HEK293 (cell line): ENCODE measurements at regions of chr7 and their contacts with region 1.

Region 1: DNA sequence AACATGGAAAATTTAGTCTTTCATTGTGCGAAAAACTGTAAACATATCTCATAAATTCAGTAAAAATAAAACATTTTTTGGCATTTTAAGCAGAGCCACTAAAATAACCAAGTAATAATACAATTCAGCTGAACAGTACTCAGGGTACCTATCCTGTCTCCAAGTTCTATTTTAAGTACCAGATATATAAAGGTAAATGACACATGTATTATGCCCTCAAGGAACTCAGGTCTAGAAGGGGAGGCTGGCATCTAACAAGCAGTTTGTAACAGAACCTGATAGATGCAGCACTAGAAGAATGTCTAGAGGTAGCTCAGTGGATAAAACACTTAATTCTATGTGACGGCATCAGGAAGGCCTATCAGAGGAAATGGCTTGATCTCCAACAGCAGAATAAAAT is 112.2 kb downstream of the CRPPA start:
- H3K4me3 ChIP-seq: no peak overlapping the region
- H3K27ac ChIP-seq: no peak overlapping the region
- H3K4me1 ChIP-seq: no peaks in the 10 kb centered on the region
- CTCF ChIP-seq: no peak

Region 2: GRCh38 chr7:16078076-16078952 is 230.8 kb before region 1 on chr7:
- CTCF ChIA-PET with region 1: no interaction called
- POLR2A ChIA-PET with region 1: no interaction called
- H3K4me3 ChIP-seq: no peak overlapping the region
- H3K27ac ChIP-seq: no peak overlapping the region
- H3K4me1 ChIP-seq: no peaks in the 10 kb centered on the region
- CTCF ChIP-seq: peak; percentile 25; the same call in 1 of the 2 replicates

Region 3: DNA sequence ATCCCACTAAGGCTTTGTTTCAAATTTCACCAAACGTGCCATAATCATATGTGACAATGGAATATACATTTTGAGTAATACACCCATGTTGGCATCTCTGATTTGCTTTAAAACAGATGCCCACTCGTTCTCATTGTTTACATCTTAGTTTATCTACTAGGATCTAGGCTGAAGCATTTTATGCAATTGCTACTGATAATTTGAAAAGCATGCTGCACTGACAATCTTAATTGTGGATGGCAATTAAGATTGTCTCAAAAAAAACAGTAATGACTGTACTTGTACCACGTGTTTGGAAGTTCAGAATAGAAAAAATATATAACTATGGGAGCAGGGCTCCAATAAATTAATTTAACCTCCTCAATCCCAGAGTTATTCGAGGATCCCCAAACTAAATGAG is 24.5 kb before region 1 on chr7:
- CTCF ChIA-PET with region 1: no interaction called
- POLR2A ChIA-PET with region 1: interaction called, 15 read pairs
- H3K4me3 ChIP-seq: no peak overlapping the region
- H3K27ac ChIP-seq: no peak overlapping the region
- H3K4me1 ChIP-seq: no peaks in the 10 kb centered on the region
- CTCF ChIP-seq: no peak